ENCODE measurements at regions of chr9 and their contacts with region 1.

Region 1: DNA sequence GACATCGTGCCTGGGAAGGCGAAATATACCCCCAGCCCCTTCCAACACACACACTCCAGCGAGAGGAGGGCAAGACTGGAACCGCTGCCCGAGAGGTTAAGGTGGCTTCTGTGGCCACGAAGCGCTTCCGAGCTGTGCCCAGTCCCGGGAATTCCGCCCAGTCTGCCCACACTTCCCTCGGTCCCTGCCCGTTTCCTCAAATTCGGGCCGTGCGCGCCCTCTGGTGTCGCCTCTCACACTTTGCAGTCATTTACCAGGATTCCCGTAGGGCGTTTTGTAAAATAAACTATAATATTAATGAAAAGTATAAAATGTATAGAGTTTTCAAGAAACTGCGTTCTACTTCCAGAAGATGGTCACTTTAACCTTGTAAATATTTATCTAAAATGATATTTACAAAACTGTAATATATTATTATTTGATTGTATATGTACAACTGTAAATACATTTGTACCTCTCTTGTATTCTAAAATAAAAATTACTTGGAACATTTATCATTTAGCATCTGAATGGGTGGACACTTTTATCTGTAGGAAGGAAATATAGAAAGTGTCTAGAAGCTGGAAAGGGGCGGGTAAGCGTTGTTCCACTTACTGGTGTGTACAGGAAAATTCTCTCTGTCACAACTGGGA is 11.0 kb upstream of the EXOSC2 start:
- DNase-seq: peak; percentile 78
- ATAC-seq: peak; percentile 30
- H3K4me3 Mint-ChIP-seq: peak overlapping the region; percentile 81
- H3K27ac Mint-ChIP-seq: peak overlapping the region; percentile 77
- H3K4me1 Mint-ChIP-seq: peaks cover 5% of the 10 kb centered on the region
- H3K27me3 Mint-ChIP-seq: peaks cover 4% of the 10 kb centered on the region

Region 2: DNA sequence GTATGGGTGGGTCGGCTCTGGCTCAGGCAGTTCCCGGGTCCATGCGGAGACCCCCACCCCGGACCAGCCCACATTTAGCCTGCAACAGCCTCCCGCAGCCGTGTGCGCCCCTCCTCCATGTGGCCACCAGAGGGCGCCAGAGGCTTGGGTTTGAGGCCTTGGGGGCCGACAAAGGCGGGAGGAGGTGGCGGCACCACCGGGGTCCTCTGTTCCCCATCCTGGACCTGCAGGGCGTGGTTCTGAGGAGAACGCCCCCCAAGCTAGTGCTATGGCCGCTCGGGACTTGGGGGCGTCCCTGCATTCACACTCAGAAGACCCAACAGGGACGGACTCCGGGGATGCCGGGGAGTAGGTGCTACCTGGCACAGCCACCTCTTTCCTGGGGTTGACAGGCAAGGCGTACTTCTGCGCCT is 221.4 kb before region 1 on chr9:
- CTCF ChIA-PET with region 1: interaction called, 52 read pairs
- POLR2A ChIA-PET with region 1: no interaction called
- intact Hi-C with region 1: loop called (anchors 1 kb)
- DNase-seq: peak; percentile 83
- ATAC-seq: peak; percentile 71
- H3K4me3 Mint-ChIP-seq: no peak overlapping the region
- H3K27ac Mint-ChIP-seq: no peak overlapping the region
- H3K4me1 Mint-ChIP-seq: no peaks in the 10 kb centered on the region
- H3K27me3 Mint-ChIP-seq: peaks cover 17% of the 10 kb centered on the region

Region 3: DNA sequence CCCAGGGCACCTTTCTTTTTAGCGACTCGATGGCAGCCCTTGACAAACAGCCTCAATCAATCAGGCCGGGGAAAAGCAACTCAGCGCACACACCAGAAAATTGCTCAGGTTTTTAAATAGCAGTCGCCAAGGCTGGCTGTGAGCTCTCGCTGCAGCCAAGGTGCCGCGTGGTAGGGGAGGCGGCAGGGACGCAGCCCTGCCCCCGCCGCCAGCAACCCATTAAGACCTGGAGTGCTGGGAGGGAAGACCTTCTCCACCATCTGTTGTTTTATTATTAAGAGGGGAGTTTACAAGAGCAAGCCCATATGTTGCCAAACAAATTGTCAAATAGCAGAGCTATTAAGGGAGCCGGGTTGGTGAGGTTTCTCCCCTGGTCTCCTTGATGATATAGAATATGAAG is 215.2 kb before region 1 on chr9:
- CTCF ChIA-PET with region 1: interaction called, 52 read pairs
- POLR2A ChIA-PET with region 1: no interaction called
- intact Hi-C with region 1: no loop called
- DNase-seq: no peak
- ATAC-seq: no peak
- H3K4me3 Mint-ChIP-seq: no peak overlapping the region
- H3K27ac Mint-ChIP-seq: no peak overlapping the region
- H3K4me1 Mint-ChIP-seq: no peaks in the 10 kb centered on the region
- H3K27me3 Mint-ChIP-seq: peaks cover 25% of the 10 kb centered on the region

Region 4: DNA sequence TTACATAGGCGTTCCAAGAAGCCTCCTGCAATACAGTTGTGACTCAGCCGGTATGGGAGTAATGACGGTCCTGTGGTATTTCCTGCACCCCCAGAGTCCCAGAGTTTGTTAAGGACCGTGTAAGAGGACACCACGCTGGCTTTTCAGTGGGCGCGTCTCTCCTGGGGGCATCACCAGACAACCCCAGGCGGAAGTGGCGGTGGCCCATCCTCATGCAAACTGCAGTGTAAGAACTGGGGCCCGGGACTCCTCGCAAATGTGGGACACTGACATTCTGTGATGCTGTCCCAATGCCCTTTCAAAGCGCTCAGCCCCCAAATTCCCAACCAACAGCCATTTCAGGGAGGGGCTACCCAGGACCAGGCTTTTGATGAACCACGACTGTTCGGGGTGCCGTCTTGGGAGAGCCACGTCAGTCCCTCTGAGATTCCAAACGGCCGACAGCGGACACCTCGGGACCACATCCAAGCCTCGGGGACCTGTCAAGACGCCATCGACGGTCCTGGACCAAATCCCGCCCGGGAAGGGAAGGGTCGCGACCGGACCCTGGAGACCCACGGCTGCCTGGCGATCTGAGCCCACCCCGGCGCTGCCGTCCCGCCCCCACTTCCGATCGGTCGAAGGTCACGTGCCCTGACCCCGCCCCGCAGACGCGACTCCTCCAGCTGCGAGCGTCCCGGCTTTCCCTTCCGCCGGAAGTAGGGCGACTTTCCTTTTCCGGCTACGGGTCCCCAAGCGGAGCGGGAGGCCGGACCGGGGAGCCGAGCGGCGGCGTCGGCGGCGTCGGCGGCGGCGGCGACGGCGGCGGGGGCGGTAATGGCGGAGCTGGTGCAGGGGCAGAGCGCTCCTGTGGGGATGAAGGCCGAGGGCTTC is 103.5 kb before region 1 on chr9 and contains the start of gene FUBP3:
- CTCF ChIA-PET with region 1: interaction called, 6 read pairs
- POLR2A ChIA-PET with region 1: no interaction called
- intact Hi-C with region 1: loop called in 1 of 2 experiments (anchors 1 kb)
- DNase-seq: peak; percentile 96
- ATAC-seq: peak; percentile 94
- H3K4me3 Mint-ChIP-seq: peak within 1 kb of the TSS; percentile 90
- H3K27ac Mint-ChIP-seq: peak within 1 kb of the TSS; percentile 89
- H3K4me1 Mint-ChIP-seq: peaks cover 32% of the 10 kb centered on the region
- H3K27me3 Mint-ChIP-seq: no peaks in the 10 kb centered on the region
- total RNA-seq, gene FUBP3: 36.4 to 38.5 TPM

Region 5: GRCh38 chr9:130599625-130600024 is 83.0 kb before region 1 on chr9:
- CTCF ChIA-PET with region 1: no interaction called
- POLR2A ChIA-PET with region 1: no interaction called
- intact Hi-C with region 1: no loop called
- DNase-seq: no peak
- ATAC-seq: no peak
- H3K4me3 Mint-ChIP-seq: no peak overlapping the region
- H3K27ac Mint-ChIP-seq: no peak overlapping the region
- H3K4me1 Mint-ChIP-seq: no peaks in the 10 kb centered on the region
- H3K27me3 Mint-ChIP-seq: no peaks in the 10 kb centered on the region

Region 6: DNA sequence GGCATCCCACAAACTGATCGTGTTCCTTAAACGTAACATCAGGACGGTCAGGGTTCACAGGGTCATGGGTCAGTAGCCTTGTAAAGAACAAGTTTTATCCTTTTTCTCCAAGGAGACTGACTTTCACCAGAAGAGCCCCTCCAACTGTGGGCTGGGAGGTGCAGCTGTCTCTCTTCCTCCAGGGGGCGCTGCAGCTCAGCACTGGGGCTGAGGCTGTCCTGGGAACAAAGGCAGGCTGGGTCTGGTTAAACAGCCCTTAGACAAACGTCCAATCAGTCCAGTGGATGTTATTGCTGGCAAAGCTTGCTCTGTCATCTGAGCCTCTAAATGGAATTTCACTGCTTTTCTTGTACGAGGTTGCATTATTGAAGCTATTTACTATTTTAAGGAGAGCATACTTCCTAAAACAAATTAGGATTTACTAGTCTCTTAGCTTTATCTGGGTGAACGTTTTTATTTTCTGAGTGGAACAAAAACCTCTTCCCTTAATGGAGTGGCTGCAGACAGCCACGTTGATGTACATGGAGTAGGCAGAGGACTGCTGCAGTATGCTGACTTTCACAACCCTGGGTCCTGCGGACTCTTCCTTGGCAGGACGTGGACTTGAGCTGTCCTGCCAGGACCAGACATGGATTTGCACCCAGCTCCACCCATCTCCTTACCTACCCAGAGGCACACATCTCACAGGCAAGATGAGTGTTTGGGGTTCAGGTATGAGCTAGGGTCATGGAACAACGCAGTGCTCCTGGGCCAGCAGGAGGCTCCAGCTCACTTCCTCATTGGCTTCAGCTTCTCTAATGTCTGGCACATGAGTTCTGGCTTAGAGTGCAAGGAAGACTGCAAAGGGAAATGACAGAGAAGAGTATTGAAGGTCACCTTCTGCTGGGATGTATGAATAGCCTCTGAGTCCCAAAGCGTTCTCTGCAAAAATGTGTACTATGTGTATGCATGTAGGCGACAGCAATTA is 18.7 kb after region 1 on chr9:
- CTCF ChIA-PET with region 1: interaction called, 17 read pairs
- POLR2A ChIA-PET with region 1: interaction called, 7 read pairs
- intact Hi-C with region 1: no loop called
- DNase-seq: peak; percentile 87
- ATAC-seq: peak; percentile 93
- H3K4me3 Mint-ChIP-seq: no peak overlapping the region
- H3K27ac Mint-ChIP-seq: no peak overlapping the region
- H3K4me1 Mint-ChIP-seq: peaks cover 22% of the 10 kb centered on the region
- H3K27me3 Mint-ChIP-seq: no peaks in the 10 kb centered on the region

Region 7: GRCh38 chr9:130805510-130806326 is 123.1 kb after region 1 on chr9:
- CTCF ChIA-PET with region 1: no interaction called
- POLR2A ChIA-PET with region 1: no interaction called
- intact Hi-C with region 1: no loop called
- DNase-seq: no peak
- ATAC-seq: no peak
- H3K4me3 Mint-ChIP-seq: no peak overlapping the region
- H3K27ac Mint-ChIP-seq: no peak overlapping the region
- H3K4me1 Mint-ChIP-seq: peaks cover 4% of the 10 kb centered on the region
- H3K27me3 Mint-ChIP-seq: no peaks in the 10 kb centered on the region

Measured in activated CD4-positive, alpha-beta T cell treated with anti-CD3 and anti-CD28 coated beads for 36 hours (primary cell).